ENCODE measurements at regions of chr16 and their contacts with region 1.

Region 1: DNA sequence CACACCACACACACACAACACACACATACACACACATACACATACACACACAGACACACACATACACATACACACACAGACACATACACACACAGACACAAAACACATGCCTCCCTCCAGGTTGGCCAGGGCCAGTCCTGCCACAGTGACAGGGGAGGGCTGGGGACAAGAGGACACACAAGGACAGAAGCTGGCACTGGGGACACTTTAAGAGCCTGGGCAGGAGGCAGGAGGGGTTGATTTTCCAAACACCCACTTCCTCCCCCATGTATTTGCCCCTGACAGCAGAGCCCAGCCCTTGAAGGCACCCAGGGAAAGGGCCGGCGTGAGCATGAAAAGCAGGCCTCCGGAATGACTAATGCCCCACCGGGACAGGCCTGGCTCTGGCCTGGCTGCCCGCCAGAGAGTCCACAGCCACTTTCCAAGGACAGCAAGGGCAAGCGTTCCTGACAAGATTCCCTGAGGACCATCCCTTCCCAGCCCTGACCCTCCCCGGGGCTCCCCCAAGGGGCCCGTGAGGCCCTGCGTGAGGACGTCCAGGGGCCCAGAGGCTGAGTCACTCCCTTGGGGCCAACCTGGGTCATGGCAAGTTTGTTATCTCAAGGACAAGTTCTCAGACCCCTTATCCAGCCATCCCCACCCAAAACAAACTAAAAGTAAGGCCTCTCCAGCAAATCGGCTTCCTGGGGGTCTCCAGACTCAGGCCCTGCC is 235.6 kb downstream of the ZNF423 start:
- DNase-seq: peak; percentile 69 to 95
- H3K4me3 ChIP-seq: no peak overlapping the region
- H3K27ac ChIP-seq: peak overlapping the region; percentile 81 to 89
- H3K4me1 ChIP-seq: peaks cover 7 to 26% of the 10 kb centered on the region in 2 donors
- H3K27me3 ChIP-seq: no peaks in the 10 kb centered on the region
- CTCF ChIP-seq: no peak

Region 2: DNA sequence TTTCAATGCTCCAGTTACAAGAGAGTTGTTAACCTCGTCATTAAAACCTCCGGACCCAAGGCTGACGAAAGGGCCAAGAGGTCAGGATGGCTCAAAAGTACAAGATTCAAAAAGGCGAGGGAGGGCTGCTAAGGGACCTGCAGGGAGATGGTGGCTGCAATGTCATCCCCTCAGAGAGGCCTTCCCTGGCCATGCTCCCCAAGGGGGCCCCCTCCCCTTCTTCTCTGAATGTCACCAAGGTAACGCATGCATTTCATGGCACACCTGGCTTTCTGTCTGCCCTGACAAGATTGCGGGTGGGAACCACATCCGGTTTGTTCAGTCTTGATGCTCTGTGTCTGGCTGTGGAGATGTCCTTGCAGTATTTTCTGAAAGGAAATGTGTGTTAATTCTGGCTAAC is 156.8 kb before region 1 on chr16:
- intact Hi-C with region 1: no loop called
- DNase-seq: peak in 1 of 2 donors; percentile 61
- H3K4me3 ChIP-seq: no peak overlapping the region
- H3K27ac ChIP-seq: no peak overlapping the region
- H3K4me1 ChIP-seq: no peaks in the 10 kb centered on the region
- H3K27me3 ChIP-seq: no peaks in the 10 kb centered on the region
- CTCF ChIP-seq: no peak

Region 3: DNA sequence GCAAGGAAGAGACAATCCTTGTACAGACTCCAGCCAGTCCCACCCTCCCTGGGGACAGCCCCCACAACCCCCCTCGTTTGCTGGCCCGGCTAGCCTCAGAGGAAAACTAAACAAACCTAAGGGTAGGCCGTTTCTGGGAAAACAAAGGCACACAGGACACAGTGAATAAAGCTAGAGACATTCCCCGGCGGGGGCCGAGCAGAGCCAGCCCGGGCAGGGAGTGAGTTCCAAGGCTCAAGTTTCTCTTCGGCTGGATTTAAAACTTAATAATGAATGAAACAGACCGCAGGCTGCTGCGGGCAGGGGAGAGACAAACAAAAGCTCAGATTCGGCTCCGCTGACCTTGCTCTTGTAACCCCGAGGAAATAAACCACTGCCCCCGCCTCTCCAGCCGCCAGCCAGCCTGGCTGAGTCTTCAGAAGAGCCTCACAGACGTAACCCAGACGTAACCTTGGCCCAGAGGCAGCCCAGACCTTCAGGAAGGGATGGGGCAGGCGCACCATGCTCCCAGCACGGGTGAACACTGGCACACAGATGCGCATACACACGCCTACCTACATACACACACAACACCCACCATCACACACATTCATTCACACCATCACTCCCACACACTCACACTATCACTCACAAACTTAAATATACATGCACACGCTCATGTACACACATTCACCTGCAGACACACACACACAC is 19.6 kb after region 1 on chr16:
- intact Hi-C with region 1: loop called (anchors 2 kb)
- DNase-seq: peak in 1 of 2 donors; percentile 80
- H3K4me3 ChIP-seq: peak overlapping the region in 1 of 2 donors; percentile 45
- H3K27ac ChIP-seq: peak overlapping the region; percentile 65 to 66
- H3K4me1 ChIP-seq: peaks cover 9 to 37% of the 10 kb centered on the region in 2 donors
- H3K27me3 ChIP-seq: no peaks in the 10 kb centered on the region
- CTCF ChIP-seq: no peak

Measured in ascending aorta (tissue), 2 donors.